Activated T-helper 2 cell treated with anti-CD3 and anti-CD28 coated beads, Interferon-gamma antibody, Interleukin-2, Interleukin-4, amounts not matched to agents 10 μg/mL and 5 μg/mL and 100 μg/mL, durations not matched to agents 14 hours and 24 hours and 36 hours (primary cell): ENCODE measurements at regions of chr2 and their contacts with region 1.

Region 1: DNA sequence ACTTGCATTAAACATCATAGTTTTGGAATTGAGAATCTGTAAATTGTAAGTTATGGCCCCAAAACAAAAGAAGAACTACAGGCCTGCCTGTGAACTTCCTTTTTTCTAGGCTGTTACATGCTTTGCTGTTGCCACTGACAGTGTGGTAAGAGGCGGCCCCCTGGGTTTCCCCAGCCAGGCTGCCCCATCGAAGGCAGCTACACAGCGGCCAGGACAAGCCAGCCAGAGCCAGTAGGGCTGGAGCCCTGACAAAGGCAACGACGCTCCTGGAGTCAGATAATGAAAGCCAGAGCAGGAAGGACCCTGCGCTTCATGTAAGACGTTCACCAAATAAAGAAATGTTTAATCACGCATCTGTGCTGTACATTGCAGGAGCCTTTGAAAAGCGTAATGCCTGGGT is 55.0 kb downstream of the ANKRD44 start:
- DNase-seq: peak; percentile 68
- H3K4me3 Mint-ChIP-seq: peak overlapping the region; percentile 80
- H3K27ac Mint-ChIP-seq: peak overlapping the region; percentile 100
- H3K4me1 Mint-ChIP-seq: peaks cover 64% of the 10 kb centered on the region
- H3K27me3 Mint-ChIP-seq: no peaks in the 10 kb centered on the region

Region 2: DNA sequence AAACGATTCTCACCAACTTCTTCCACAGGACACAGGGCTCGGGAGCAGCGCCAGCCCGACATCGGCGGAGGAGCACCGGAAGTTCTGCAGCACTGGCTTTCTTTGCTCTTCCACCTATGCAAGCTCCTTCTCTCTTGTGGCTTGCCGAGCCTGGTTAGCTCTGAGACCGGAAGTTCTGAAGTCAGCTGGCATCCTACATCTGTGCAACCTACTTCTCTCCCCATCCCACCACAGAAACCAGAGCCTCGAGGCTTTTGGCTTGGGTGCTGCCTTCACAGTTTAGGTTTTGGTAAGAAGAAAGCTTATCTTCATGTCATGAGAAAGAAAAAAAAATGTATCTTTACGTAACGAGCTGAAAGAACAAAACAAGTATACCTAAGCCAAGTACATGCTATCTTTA is 56.7 kb before region 1 on chr2:
- intact Hi-C with region 1: loop called (anchors 2 kb)
- DNase-seq: peak; percentile 89
- H3K4me3 Mint-ChIP-seq: peak overlapping the region; percentile 86
- H3K27ac Mint-ChIP-seq: peak overlapping the region; percentile 95
- H3K4me1 Mint-ChIP-seq: peaks cover 80% of the 10 kb centered on the region
- H3K27me3 Mint-ChIP-seq: no peaks in the 10 kb centered on the region

Region 3: GRCh38 chr2:197216361-197216979 is 39.1 kb before region 1 on chr2:
- intact Hi-C with region 1: loop called (anchors 1 kb)
- DNase-seq: no peak
- H3K4me3 Mint-ChIP-seq: peak overlapping the region; percentile 74
- H3K27ac Mint-ChIP-seq: peak overlapping the region; percentile 96
- H3K4me1 Mint-ChIP-seq: peaks cover 77% of the 10 kb centered on the region
- H3K27me3 Mint-ChIP-seq: no peaks in the 10 kb centered on the region

Region 4: GRCh38 chr2:197268786-197269584 is 13.4 kb after region 1 on chr2:
- intact Hi-C with region 1: loop called (anchors 1 kb)
- DNase-seq: no peak
- H3K4me3 Mint-ChIP-seq: peak overlapping the region; percentile 34
- H3K27ac Mint-ChIP-seq: peak overlapping the region; percentile 81
- H3K4me1 Mint-ChIP-seq: peaks cover 77% of the 10 kb centered on the region
- H3K27me3 Mint-ChIP-seq: no peaks in the 10 kb centered on the region

Region 5: DNA sequence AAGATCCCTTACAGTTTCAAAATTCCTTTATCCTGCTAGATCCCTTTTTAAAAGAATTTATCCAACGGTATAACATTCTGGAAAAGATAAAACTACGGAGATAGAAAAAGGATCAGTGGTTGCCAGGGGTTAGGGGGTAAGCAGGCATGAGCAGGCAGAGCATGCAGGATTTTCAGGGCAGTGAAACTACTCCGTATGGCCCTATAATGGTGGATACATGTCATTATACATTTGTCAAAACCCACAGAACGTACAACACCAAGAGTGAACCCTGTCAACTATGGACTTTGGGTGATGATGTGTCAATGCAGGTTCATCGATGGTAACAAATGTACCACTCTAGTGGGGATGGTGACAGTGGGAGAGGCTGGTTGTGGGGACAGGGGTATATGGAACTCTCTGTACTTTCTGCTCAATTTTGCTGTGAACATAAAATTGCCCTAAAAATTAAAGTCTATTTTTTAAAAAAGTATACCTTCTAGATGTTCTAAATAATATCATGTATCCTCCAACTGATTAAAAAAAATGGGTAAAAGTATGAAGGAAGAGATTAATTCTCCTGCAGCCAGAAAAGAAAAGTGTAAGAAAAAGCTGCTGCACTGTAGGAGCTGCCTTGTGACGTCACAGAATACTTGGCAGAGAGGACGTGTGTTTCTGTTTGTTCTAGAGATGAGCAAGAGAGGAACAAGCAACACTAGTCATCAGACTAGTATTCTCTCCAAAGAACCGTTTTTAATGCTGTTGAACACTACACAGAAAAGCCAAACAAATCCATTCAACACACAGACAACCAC is 31.5 kb after region 1 on chr2:
- intact Hi-C with region 1: no loop called
- DNase-seq: no peak
- H3K4me3 Mint-ChIP-seq: peak overlapping the region; percentile 65
- H3K27ac Mint-ChIP-seq: peak overlapping the region; percentile 97
- H3K4me1 Mint-ChIP-seq: peaks cover 59% of the 10 kb centered on the region
- H3K27me3 Mint-ChIP-seq: no peaks in the 10 kb centered on the region

Region 6: DNA sequence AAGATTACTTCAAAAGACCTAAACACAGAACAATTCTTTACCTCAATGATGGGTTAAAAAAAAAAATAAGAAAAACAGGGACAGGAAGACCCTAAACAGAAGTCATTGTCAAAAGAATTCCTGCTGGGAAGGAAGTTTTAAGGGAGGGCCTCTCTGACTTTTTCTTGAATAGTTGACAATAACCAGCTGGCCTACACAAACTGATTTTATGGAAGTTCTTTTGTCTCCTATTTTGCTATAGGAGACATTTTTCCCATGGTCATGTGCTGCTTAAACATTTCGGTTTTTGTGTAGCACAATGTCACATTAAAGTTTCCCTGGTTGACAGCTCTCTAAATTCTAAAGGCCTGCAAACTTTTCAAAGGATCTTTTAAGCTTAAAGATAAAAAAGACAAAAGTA is 364.6 kb after region 1 on chr2:
- intact Hi-C with region 1: no loop called
- DNase-seq: no peak
- H3K4me3 Mint-ChIP-seq: no peak overlapping the region
- H3K27ac Mint-ChIP-seq: no peak overlapping the region
- H3K4me1 Mint-ChIP-seq: no peaks in the 10 kb centered on the region
- H3K27me3 Mint-ChIP-seq: no peaks in the 10 kb centered on the region

Region 7: DNA sequence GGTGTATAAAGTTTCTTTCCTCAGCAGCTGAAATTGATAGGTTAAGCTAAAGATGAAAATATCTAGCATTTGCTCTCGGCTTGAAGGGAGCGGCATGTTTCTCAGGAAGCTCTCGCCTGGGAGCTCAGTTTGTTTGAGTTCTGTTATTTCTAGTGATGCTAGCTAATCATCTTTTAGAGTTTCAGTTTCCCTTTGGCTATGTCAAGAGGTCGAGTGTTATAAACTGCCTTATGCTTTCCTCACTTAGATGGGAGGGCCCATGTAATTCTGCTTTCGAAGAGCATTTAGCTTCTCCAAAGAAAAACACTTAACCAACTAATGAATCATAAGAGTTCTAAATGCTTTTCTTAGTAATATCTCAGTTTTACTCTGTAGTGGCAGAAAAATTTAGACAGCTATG is 582.5 kb after region 1 on chr2:
- intact Hi-C with region 1: loop called (anchors 5 kb)
- DNase-seq: no peak
- H3K4me3 Mint-ChIP-seq: peak overlapping the region; percentile 53
- H3K27ac Mint-ChIP-seq: peak overlapping the region; percentile 68
- H3K4me1 Mint-ChIP-seq: peaks cover 44% of the 10 kb centered on the region
- H3K27me3 Mint-ChIP-seq: peaks cover 4% of the 10 kb centered on the region

Region 8: DNA sequence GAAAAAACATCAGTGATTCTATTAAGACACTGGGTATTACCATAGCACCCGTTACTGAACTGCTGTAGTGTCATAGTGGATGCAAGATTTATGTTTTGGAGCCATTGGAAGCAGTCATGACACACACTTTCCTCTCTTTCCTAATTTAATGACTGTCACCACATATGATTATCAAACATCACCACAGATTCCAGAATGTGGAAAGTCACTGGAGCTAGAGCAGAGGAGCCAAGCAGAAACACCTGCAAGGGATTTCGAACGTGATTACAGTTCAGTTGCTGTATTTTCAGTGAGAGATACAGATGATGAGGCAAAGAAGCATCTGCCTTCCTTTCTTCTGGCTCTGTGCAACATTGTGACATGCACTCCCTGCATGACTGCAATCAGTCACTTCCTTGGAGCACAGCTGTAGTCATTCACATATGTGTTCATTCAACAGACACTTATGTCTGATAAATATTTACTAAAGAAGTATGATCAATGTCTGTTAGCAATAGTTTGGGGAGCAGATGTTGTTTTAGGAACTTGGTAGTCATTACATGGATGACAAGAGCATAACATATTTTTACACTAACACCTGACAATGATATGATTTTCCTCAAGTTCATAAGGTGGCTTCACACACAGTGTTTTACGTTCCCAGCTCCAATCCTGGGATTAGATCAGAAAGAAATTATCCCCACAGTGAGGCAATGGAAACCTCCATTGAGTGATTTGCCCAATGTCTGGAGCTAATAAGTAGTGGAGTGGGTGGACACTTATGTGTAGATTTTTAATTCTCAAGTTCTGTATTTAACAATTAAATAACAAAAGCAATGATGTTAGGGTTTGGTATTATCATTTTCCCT is 965.4 kb after region 1 on chr2:
- intact Hi-C with region 1: no loop called
- DNase-seq: no peak
- H3K4me3 Mint-ChIP-seq: no peak overlapping the region
- H3K27ac Mint-ChIP-seq: no peak overlapping the region
- H3K4me1 Mint-ChIP-seq: no peaks in the 10 kb centered on the region
- H3K27me3 Mint-ChIP-seq: peaks cover 6% of the 10 kb centered on the region